Kidney (tissue), 22 donors: ENCODE measurements at regions of chr16 and their contacts with region 1.

Region 1: GRCh38 chr16:69930117-69930776 is 20.9 kb upstream of the CLEC18A start:
- DNase-seq: peak in 4 of 5 donors; percentile 61 to 84 (median 68)
- H3K4me3 ChIP-seq: no peak overlapping the region
- H3K27ac ChIP-seq: no peak overlapping the region
- H3K4me1 ChIP-seq: peaks cover 2 to 11% (median 3%) of the 10 kb centered on the region in 3 donors
- H3K27me3 ChIP-seq: no peaks in the 10 kb centered on the region
- CTCF ChIP-seq: peak; percentile 68

Region 2: DNA sequence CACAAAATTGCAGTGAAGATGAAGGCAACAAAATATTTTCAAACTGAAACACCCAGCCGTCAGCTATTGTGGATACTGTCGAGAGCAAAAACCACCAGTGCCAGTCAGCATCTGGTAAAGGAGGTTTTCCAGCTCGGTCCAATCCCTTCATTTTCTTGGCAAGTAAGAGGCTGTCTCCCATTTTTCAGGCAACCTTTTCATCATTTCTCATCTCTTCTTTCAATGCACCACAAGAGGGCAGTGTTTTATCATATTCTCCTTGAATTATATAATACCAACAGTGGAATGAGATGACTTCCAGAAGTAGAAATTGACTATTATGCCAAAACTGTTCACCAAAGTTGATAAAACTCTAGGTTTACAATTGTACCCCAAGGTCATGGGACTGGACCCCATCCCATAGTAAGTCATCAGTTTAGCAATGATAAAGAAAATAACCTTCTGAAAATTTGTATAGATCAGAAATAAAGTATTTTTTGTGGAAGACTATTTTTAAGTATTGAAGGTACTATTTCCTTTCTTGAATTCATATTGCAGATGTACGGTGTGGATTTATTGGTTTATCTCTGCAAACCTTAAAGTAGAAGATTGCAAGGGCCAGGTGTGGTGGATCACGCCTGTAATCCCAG is 220.7 kb before region 1 on chr16:
- intact Hi-C with region 1: no loop called
- DNase-seq: peak in 2 of 5 donors; percentile 78 to 84
- H3K4me3 ChIP-seq: no peak overlapping the region
- H3K27ac ChIP-seq: peak overlapping the region in 1 of 2 donors; percentile 44
- H3K4me1 ChIP-seq: peaks cover 0 to 13% (median 5%) of the 10 kb centered on the region in 3 donors
- H3K27me3 ChIP-seq: no peaks in the 10 kb centered on the region
- CTCF ChIP-seq: peak; percentile 73

Region 3: DNA sequence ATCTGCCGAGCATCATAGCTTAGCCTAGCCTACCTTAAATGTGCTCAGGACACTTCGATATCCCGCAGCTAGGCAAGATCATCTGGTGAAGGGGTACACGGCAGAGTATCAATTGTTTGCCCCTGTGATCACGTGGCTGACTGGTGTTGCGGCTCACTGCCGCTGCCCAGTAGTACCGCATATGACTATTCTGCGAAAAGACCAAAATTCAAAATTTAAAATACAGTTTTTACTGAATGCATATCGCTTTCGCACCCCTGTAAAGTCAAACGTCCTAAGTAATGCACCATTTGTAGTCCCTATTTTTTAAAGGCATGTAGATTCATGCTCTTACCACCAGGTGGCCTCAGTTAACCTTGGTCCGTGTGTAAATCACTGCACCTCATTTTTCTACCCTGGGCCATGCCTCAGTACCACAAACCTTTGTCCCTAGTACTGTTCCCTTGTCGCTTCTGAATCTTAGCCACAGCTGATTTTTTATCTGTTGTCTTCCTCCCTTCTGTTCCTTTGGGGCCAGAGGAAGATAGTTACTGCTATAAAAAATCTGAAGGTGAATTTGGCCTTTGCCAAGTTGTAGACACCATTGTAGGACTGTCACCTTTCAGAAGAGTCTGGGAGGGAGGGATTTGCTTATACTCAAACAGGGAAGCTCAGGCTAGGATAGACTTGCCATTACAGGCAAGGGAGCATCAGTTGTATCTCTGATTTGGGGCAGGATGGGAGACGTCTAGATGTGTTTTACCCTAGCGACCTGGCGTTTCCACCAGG is 133.7 kb before region 1 on chr16:
- intact Hi-C with region 1: loop called (anchors 10 kb)
- DNase-seq: peak in 4 of 5 donors; percentile 50 to 92 (median 70)
- H3K4me3 ChIP-seq: peak overlapping the region; percentile 12 to 36 (median 28)
- H3K27ac ChIP-seq: no peak overlapping the region
- H3K4me1 ChIP-seq: peaks cover 3 to 8% (median 6%) of the 10 kb centered on the region in 3 donors
- H3K27me3 ChIP-seq: no peaks in the 10 kb centered on the region
- CTCF ChIP-seq: peak; percentile 92

Region 4: DNA sequence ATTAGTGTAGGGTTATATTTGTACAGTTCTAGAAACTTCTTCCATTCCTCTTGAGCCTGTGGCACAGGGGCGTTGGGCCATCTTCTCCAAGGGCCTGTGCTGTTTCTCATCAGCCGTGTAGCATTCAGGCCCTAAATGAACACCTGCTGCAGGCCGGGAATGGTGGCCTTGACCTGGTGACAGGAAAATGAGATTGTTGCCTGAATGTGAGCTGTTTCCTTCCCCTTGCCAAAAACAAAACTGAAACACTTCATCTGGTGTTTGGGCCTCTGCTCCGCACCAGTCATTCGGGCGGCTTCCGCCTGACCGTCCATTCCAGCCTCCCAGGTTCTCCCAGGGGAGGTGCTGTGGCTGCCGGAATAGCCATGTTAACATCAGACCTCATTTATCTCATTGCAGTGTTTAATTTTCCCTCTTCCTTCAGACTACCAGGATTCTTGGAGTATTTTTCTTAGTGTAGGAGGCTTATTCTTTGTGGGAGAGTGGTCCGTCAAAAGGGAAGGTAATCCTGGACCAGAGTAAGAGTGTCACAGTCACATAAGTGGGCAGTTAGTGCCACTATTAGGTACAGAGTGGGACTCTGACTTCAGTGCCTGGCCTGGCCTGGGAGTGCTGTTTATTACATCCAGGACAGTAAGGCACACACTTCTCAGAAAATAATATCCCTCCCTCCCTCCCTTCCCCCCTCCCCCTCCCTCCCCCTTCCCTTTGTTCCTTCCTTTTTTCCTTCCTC is 106.2 kb before region 1 on chr16:
- intact Hi-C with region 1: no loop called
- DNase-seq: peak in 2 of 5 donors; percentile 29 to 71
- H3K4me3 ChIP-seq: peak overlapping the region in 1 of 3 donors; percentile 30
- H3K27ac ChIP-seq: peak overlapping the region; percentile 58 to 62
- H3K4me1 ChIP-seq: peaks cover 0 to 5% (median 0%) of the 10 kb centered on the region in 3 donors
- H3K27me3 ChIP-seq: no peaks in the 10 kb centered on the region
- CTCF ChIP-seq: no peak